B cell (primary cell): ENCODE measurements at regions of chr16 and their contacts with region 1.

Region 1: GRCh38 chr16:66608241-66609138 is 4.0 kb downstream of the CMTM3 start:
- DNase-seq: peak; percentile 74
- ATAC-seq: peak; percentile 16
- H3K4me3 ChIP-seq: no peak overlapping the region
- H3K4me3 Mint-ChIP-seq: no peak overlapping the region
- H3K27ac ChIP-seq: no peak overlapping the region
- H3K27ac Mint-ChIP-seq: no peak overlapping the region
- H3K4me1 ChIP-seq: peaks cover 39 to 44% of the 10 kb centered on the region in 2 donors
- H3K4me1 Mint-ChIP-seq: peaks cover 33% of the 10 kb centered on the region
- H3K27me3 ChIP-seq: peaks cover 0 to 33% (median 11%) of the 10 kb centered on the region in 4 experiments
- H3K27me3 Mint-ChIP-seq: peaks cover 21% of the 10 kb centered on the region
- CTCF ChIP-seq: peak; percentile 79

Region 2: DNA sequence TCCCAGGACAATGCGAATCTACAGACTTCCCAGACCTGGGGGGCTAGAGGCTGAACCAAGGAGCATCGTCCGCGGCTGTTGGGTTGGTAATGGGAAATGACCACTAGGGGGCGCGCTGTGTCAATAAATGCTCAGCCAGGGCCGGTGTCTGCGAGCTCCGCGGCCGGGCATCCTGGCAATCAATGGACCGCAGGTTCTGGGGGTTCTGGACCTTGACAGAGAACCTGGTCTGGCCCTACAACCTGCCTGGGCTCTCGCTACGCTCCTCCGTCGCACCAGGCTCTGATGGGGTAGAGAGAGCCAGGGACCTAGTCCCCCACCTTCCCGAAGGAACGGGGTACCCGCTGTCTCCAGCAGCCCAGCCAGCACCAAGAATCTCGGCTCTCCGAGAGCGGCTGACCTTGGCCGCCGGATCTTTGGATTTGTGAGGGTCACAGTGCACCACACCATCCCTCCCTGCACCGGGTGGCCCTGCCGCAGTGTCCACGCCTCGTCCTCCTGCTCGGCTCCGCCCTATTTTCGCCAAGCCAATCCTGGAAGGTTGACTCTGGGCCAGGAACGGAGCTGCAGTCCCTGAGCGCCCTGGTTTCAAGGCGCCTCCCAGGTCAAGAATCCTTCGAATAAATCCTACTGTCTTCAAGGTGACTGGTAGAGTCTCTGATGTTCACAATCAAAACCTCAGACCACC is 201.8 kb before region 1 on chr16:
- CTCF ChIA-PET with region 1: interaction called, 25 read pairs
- POLR2A ChIA-PET with region 1: no interaction called
- intact Hi-C with region 1: loop called (anchors 1 kb)
- DNase-seq: peak; percentile 88
- ATAC-seq: peak; percentile 92
- H3K4me3 ChIP-seq: peak overlapping the region in 4 of 5 experiments; percentile 10 to 56 (median 44)
- H3K4me3 Mint-ChIP-seq: peak overlapping the region; percentile 79
- H3K27ac ChIP-seq: no peak overlapping the region
- H3K27ac Mint-ChIP-seq: no peak overlapping the region
- H3K4me1 ChIP-seq: peaks cover 16 to 18% of the 10 kb centered on the region in 2 donors
- H3K4me1 Mint-ChIP-seq: peaks cover 14% of the 10 kb centered on the region
- H3K27me3 ChIP-seq: peaks cover 0 to 22% (median 17%) of the 10 kb centered on the region in 4 experiments
- H3K27me3 Mint-ChIP-seq: peaks cover 47% of the 10 kb centered on the region
- CTCF ChIP-seq: peak; percentile 96

Region 3: DNA sequence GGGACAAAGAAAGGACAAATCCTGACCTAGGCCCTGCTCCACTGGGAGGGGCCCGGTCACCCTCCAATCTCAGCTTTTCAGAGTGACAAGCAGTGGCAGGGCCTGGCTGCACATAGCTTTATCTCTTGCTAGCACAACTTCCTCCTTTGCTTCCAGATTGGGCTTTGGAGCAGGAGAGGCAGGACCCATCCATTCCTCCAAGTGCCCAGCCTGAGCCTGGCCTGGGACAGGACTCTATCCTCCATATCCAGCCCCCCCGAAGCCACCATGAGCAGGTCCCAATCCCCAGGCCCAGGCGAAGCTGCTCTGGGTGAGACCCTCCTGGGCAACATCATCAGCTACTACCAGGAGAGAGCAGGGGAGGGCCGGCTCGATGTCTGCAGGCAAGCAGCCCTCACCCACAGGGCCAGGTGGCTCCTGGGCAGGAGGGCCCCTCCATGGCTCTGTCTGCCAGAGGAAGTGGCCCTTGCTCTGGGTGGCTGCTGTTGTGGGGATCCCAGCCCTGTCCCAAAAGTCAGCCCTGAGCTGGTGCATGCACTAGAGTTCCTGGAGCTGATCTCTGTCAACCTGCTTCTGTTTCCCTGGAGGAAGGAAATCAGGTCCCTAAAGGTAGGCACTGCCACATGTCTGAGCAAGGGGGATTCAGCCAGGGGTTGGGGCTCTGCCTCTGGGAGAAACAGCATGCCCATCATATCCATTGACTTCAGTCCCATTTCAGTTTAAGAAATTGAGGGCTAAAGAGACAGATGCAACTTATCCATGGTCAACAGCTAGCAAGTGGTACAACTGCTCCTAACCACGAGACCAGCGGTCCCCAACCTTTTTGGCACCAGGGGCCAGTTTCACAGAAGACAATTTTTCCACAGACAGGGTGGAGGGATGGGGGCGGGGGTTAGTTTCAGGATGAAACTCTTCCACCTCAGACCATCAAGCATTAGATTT is 117.4 kb before region 1 on chr16:
- CTCF ChIA-PET with region 1: no interaction called
- POLR2A ChIA-PET with region 1: no interaction called
- intact Hi-C with region 1: no loop called
- DNase-seq: peak; percentile 6
- ATAC-seq: no peak
- H3K4me3 ChIP-seq: no peak overlapping the region
- H3K4me3 Mint-ChIP-seq: no peak overlapping the region
- H3K27ac ChIP-seq: no peak overlapping the region
- H3K27ac Mint-ChIP-seq: no peak overlapping the region
- H3K4me1 ChIP-seq: no peaks in the 10 kb centered on the region
- H3K4me1 Mint-ChIP-seq: peaks cover 4% of the 10 kb centered on the region
- H3K27me3 ChIP-seq: peaks cover 0 to 24% (median under 1%) of the 10 kb centered on the region in 4 experiments
- H3K27me3 Mint-ChIP-seq: peaks cover 7% of the 10 kb centered on the region
- CTCF ChIP-seq: no peak

Region 4: GRCh38 chr16:66516808-66517585 is 91.5 kb before region 1 on chr16:
- CTCF ChIA-PET with region 1: interaction called, 5 read pairs
- POLR2A ChIA-PET with region 1: interaction called, 11 read pairs
- intact Hi-C with region 1: loop called (anchors 2 kb)
- DNase-seq: peak; percentile 94
- ATAC-seq: peak; percentile 89
- H3K4me3 ChIP-seq: peak overlapping the region; percentile 41 to 62 (median 53)
- H3K4me3 Mint-ChIP-seq: peak overlapping the region; percentile 96
- H3K27ac ChIP-seq: peak overlapping the region; percentile 94 to 97
- H3K27ac Mint-ChIP-seq: peak overlapping the region; percentile 99
- H3K4me1 ChIP-seq: peaks cover 59 to 63% of the 10 kb centered on the region in 2 donors
- H3K4me1 Mint-ChIP-seq: peaks cover 72% of the 10 kb centered on the region
- H3K27me3 ChIP-seq: peaks cover 0 to 3% (median 0%) of the 10 kb centered on the region in 4 experiments
- H3K27me3 Mint-ChIP-seq: peaks cover under 1% of the 10 kb centered on the region
- CTCF ChIP-seq: no peak

Region 5: DNA sequence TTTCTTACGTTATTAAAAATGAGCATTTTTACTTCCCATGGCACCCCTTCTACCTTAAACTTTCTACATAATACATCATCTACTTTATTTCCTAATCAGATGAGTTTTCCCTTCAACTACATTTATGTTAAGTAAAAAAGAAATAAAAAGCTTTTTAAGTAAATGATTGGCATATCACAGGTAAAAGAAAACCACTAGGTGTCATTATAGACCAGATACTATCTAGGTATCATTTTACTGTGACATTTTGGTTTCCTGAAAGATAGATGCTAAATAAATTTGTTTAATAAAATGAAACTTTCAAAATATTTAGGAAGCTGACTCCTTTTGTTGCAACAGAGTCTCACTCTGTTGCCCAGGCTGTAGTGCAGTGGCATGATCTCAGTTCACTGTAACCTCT is 46.1 kb before region 1 on chr16:
- CTCF ChIA-PET with region 1: interaction called, 12 read pairs
- POLR2A ChIA-PET with region 1: no interaction called
- intact Hi-C with region 1: no loop called
- DNase-seq: no peak
- ATAC-seq: no peak
- H3K4me3 ChIP-seq: no peak overlapping the region
- H3K4me3 Mint-ChIP-seq: no peak overlapping the region
- H3K27ac ChIP-seq: no peak overlapping the region
- H3K27ac Mint-ChIP-seq: no peak overlapping the region
- H3K4me1 ChIP-seq: no peaks in the 10 kb centered on the region
- H3K4me1 Mint-ChIP-seq: peaks cover 22% of the 10 kb centered on the region
- H3K27me3 ChIP-seq: no peaks in the 10 kb centered on the region
- H3K27me3 Mint-ChIP-seq: no peaks in the 10 kb centered on the region
- CTCF ChIP-seq: peak; percentile 48

Region 6: GRCh38 chr16:66650707-66651473 is 42.4 kb after region 1 on chr16:
- CTCF ChIA-PET with region 1: interaction called, 14 read pairs
- POLR2A ChIA-PET with region 1: no interaction called
- intact Hi-C with region 1: loop called (anchors 1 kb)
- DNase-seq: peak; percentile 83
- ATAC-seq: peak; percentile 96
- H3K4me3 ChIP-seq: peak overlapping the region in 2 of 5 experiments; percentile 10 to 18
- H3K4me3 Mint-ChIP-seq: peak overlapping the region; percentile 78
- H3K27ac ChIP-seq: no peak overlapping the region
- H3K27ac Mint-ChIP-seq: peak overlapping the region; percentile 21
- H3K4me1 ChIP-seq: peaks cover 5 to 9% of the 10 kb centered on the region in 2 donors
- H3K4me1 Mint-ChIP-seq: peaks cover 8% of the 10 kb centered on the region
- H3K27me3 ChIP-seq: peaks cover 0 to 21% (median 4%) of the 10 kb centered on the region in 4 experiments
- H3K27me3 Mint-ChIP-seq: peaks cover 20% of the 10 kb centered on the region
- CTCF ChIP-seq: peak; percentile 95

Region 7: GRCh38 chr16:66751303-66751991 is 143.0 kb after region 1 on chr16 and contains the start of gene DYNC1LI2:
- CTCF ChIA-PET with region 1: no interaction called
- POLR2A ChIA-PET with region 1: no interaction called
- intact Hi-C with region 1: loop called (anchors 5 kb)
- DNase-seq: peak; percentile 92
- ATAC-seq: peak; percentile 95
- H3K4me3 ChIP-seq: peak within 1 kb of the TSS; percentile 43 to 92 (median 88)
- H3K4me3 Mint-ChIP-seq: peak within 1 kb of the TSS; percentile 87
- H3K27ac ChIP-seq: peak within 1 kb of the TSS; percentile 13 to 85
- H3K27ac Mint-ChIP-seq: peak within 1 kb of the TSS; percentile 89
- H3K4me1 ChIP-seq: peaks cover 18 to 19% of the 10 kb centered on the region in 2 donors
- H3K4me1 Mint-ChIP-seq: peaks cover 33% of the 10 kb centered on the region
- H3K27me3 ChIP-seq: peaks cover 0 to 11% (median 8%) of the 10 kb centered on the region in 4 experiments
- H3K27me3 Mint-ChIP-seq: peaks cover 20% of the 10 kb centered on the region
- CTCF ChIP-seq: peak; percentile 87
- total RNA-seq, gene DYNC1LI2: 109 and 111 TPM in 2 replicates